A549 (cell line): ENCODE measurements at regions of chr11 and their contacts with region 1.

Region 1: DNA sequence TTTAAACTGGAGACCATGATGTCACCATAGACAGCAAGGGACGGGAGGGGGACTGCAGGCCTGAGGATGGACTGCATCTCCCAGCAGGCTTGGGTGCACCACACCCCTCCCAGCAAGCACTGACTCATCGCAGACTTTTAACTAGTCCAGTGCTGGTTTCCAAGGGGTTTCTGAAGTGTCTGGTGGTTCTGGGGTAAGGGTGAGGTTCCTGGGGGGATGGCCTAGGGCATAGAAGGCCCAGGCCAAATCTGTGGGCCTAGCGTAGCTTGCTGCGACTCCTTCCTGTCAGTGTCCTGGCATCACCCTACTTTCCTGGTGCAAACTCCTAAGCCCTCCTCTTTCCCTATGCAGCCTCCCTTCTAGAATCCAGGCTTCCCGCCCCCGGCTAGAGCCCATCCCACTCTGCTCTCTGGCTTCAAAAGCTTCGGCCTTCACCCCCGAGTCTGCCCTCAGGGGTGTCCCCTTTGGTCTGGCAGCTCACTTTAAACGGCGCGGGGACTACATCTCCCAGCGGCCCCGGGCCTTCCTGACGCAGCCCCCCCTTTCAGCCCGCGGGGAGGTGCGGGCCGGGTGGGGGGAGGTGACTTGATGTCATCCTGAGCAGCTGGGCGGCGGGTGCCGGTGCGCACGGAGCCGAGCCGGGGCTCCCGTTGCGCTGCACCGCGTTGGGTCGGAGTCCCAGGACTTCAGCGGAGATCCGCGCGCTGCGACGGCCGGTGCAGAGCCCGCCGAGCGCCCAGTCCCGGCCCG is at the start of gene PPP2R5B:
- DNase-seq: peak; percentile 93 to 99
- ATAC-seq: peak; percentile 96 to 97
- H3K4me3 ChIP-seq: peak within 1 kb of the TSS; percentile 71
- H3K27ac ChIP-seq: peak within 1 kb of the TSS; percentile 93 to 96
- H3K4me1 ChIP-seq: peaks cover 14% of the 10 kb centered on the region
- CTCF ChIP-seq: no peak
- EP300 ChIP-seq: no peak
- POLR2A ChIP-seq: peak; percentile 55
- RAD21 ChIP-seq: 0 out of 5 replicates have a peak, but pooled peaks of 1 of the 2 experiments have one; percentile 4
- polyA plus RNA-seq, gene PPP2R5B: 6.9 and 11.1 TPM in 2 replicates

Region 2: DNA sequence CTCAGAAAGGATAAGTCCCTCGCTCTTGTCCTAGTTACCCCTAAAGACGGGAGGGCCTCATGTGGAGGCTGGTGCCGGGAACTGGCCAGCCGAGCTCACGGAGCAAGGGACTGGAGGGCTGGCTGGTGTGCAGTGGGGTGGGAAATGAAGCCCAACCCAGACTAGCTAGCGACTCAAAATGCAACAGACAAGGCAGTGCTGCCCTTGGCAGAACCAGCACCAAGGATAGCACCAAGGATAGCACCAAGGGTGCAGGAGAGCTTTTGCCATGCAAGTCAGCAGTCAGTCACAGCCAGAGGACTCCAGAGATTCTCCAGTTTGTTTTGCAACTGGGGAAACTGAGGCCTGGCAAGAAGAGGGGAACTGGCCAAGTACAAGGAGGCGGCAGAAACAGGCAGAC is 79.0 kb after region 1 on chr11:
- CTCF ChIA-PET with region 1: interaction called, 11 read pairs
- POLR2A ChIA-PET with region 1: interaction called, 5 read pairs
- DNase-seq: no peak
- ATAC-seq: no peak
- H3K4me3 ChIP-seq: no peak overlapping the region
- H3K27ac ChIP-seq: no peak overlapping the region
- H3K4me1 ChIP-seq: peaks cover 34% of the 10 kb centered on the region
- CTCF ChIP-seq: no peak
- EP300 ChIP-seq: no peak
- POLR2A ChIP-seq: no peak
- RAD21 ChIP-seq: no peak

Region 3: DNA sequence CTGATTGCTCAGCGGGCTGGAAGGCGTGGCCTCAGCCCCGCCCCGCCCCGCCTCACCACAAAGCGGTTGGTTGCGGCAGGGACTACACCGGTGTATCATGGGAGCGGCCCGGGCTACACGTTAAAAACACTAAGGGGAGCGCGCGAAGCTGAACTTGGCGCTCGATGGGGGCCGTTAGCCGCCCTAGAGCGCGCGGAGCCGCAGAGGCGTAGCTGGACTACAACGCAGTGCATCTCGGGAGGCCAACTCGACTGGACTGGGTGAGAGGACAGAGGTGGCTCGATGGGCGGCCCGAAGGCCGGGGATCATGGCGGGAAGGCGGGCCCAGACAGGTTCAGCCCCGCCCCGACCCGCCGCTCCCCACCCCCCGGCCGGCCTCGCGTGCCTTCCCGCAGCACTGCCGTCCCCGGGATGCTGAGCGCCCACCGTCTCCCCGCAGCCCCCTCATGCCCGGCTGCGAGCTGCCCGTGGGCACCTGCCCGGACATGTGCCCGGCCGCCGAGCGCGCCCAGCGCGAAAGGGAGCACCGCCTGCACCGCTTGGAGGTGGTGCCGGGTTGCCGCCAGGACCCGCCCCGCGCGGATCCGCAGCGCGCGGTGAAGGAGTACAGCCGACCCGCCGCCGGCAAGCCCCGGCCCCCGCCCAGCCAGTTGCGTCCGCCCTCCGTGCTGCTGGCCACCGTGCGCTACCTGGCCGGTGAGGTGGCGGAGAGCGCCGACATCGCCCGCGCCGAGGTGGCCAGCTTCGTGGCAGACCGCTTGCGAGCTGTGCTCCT is 116.8 kb after region 1 on chr11 and contains the start of gene SAC3D1:
- CTCF ChIA-PET with region 1: no interaction called
- POLR2A ChIA-PET with region 1: no interaction called
- DNase-seq: peak; percentile 96 to 98
- ATAC-seq: peak; percentile 93 to 97
- H3K4me3 ChIP-seq: peak within 1 kb of the TSS; percentile 84
- H3K27ac ChIP-seq: peak within 1 kb of the TSS; percentile 91 to 92
- H3K4me1 ChIP-seq: peaks cover 25% of the 10 kb centered on the region
- CTCF ChIP-seq: no peak
- EP300 ChIP-seq: no peak
- POLR2A ChIP-seq: peak; percentile 54
- RAD21 ChIP-seq: no peak
- polyA plus RNA-seq, gene SAC3D1: 9.4 and 12.9 TPM in 2 replicates